ENCODE measurements at regions of chr1 and their contacts with region 1.

Region 1: GRCh38 chr1:15571266-15571665 is 13.6 kb downstream of the AGMAT start:
- DNase-seq: no peak
- ATAC-seq: no peak; the same call in 2 of the 3 replicates
- H3K4me3 ChIP-seq: no peak overlapping the region
- H3K27ac ChIP-seq: peak overlapping the region; percentile 10; the same call in 1 of the 2 replicates
- H3K4me1 ChIP-seq: peaks cover 8% of the 10 kb centered on the region
- H3K27me3 ChIP-seq: no peaks in the 10 kb centered on the region
- CTCF ChIP-seq: no peak
- EP300 ChIP-seq: no peak
- POLR2A ChIP-seq: no peak
- RAD21 ChIP-seq: no peak

Region 2: GRCh38 chr1:15584489-15585363 is 13.5 kb after region 1 on chr1 and contains the start of gene AGMAT:
- CTCF ChIA-PET with region 1: interaction called, 9 read pairs
- POLR2A ChIA-PET with region 1: interaction called, 7 read pairs
- RAD21 ChIA-PET with region 1: interaction called, 4 read pairs
- SMC1A ChIA-PET with region 1: interaction called, 14 read pairs
- in situ Hi-C with region 1: no loop called
- intact Hi-C with region 1: no loop called
- DNase-seq: no peak
- ATAC-seq: peak; percentile 87
- H3K4me3 ChIP-seq: peak within 1 kb of the TSS; percentile 68
- H3K27ac ChIP-seq: no peak within 1 kb of the TSS
- H3K4me1 ChIP-seq: peaks cover 7% of the 10 kb centered on the region
- H3K27me3 ChIP-seq: no peaks in the 10 kb centered on the region
- CTCF ChIP-seq: peak; percentile 18 to 42 (median 39); a peak in 4 of 6 replicates
- EP300 ChIP-seq: no peak
- POLR2A ChIP-seq: peak; percentile 71
- RAD21 ChIP-seq: no peak
- polyA plus RNA-seq, gene AGMAT: 0.47 to 1.6 TPM

Region 3: DNA sequence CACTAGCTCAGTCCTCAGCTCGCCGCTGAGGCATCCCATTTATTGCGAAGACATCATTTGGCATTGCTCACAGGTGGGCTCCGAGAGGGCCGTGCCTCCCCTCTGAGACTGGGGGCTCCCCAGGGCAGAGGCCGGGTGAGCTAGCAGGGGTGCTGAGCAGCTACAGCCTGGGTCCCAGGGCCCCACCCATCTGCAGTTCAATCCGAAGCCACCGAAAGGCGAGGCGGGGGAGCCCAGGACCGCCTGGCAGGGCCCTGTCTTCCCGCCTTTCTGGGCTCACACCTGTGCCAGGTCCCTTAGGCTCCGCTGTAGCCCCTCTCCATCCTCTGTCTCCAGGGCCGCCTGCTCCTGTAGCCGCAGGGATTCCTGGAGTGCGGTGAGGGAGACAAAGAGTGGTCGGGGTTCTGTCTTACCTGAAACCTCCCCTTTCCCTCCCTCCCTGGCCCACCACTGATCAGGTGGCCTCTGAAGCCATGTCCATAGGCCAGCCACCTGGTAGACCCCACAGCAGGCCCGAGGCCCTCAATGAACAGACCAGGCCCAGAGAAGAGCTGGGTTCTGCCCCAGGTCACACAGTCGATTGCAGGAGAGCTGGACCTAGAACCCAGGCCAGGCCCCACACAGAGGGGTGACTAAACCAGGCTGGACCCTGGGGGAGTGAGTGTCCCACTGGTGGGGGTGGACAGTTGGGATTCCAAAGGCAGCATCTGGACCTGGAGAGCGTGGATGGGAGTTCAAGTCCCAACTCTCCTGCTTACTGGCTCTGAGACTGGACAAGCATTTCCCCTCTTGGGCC is 1060.2 kb after region 1 on chr1:
- CTCF ChIA-PET with region 1: no interaction called
- POLR2A ChIA-PET with region 1: no interaction called
- RAD21 ChIA-PET with region 1: no interaction called
- SMC1A ChIA-PET with region 1: no interaction called
- in situ Hi-C with region 1: no loop called
- intact Hi-C with region 1: no loop called
- DNase-seq: no peak
- ATAC-seq: no peak
- H3K4me3 ChIP-seq: no peak overlapping the region
- H3K27ac ChIP-seq: no peak overlapping the region
- H3K4me1 ChIP-seq: no peaks in the 10 kb centered on the region
- H3K27me3 ChIP-seq: no peaks in the 10 kb centered on the region
- CTCF ChIP-seq: no peak
- EP300 ChIP-seq: no peak
- POLR2A ChIP-seq: no peak
- RAD21 ChIP-seq: no peak

Measured in GM12878 (cell line).